ENCODE measurements at regions of chr18 and their contacts with region 1.

Region 1: DNA sequence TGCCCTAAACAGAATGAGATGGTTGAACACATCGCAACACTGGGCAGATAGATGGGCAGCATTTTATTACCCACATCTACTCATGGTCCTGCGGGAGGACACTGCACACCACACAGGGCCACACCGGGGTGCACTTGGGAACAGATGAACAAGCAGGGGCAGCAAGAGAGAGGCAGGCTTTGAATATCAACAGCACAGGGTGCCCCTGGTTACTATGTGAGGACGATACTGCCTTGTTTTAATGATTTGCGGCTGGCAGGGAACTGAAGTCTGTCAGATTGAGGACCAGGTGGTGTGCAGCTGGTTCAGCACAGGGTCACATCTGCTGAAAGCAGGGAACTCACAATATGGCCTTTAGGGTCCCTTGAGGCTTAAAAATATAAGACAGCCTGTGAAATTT is 195.7 kb downstream of the PIEZO2 start:
- DNase-seq: peak; percentile 84
- ATAC-seq: peak; percentile 65
- H3K4me3 ChIP-seq: peak overlapping the region; percentile 30; the same call in 1 of the 2 replicates
- H3K27ac ChIP-seq: peak overlapping the region; percentile 100
- H3K4me1 ChIP-seq: peaks cover 41% of the 10 kb centered on the region
- H3K27me3 ChIP-seq: no peaks in the 10 kb centered on the region
- CTCF ChIP-seq: no peak; a peak in 1 of 6 replicates
- EP300 ChIP-seq: peak; percentile 55 to 69; a peak in 3 of 4 replicates
- POLR2A ChIP-seq: peak; percentile 80
- RAD21 ChIP-seq: peak; percentile 21; the same call in 1 of the 2 replicates

Region 2: DNA sequence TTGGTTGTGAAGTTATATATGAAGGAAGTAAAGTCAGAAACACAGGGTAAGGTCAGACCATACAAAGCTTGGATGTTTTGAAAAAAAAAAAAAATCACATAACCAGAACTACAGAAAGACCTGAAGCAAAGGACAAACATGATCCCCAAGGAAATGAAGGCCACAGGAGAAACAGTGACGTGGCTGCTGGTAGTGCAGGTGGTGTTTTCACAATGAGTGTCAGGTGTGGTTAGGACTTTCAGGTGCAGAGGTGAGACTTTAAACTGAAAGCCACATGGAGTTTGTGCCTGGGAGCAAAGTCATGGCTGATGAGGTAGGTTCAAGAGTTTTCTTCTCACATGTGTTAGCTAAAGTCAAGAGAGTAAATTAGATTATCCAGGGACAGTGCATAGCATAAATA is 75.0 kb before region 1 on chr18:
- CTCF ChIA-PET with region 1: interaction called, 6 read pairs
- POLR2A ChIA-PET with region 1: interaction called, 8 read pairs
- RAD21 ChIA-PET with region 1: interaction called, 19 read pairs
- SMC1A ChIA-PET with region 1: interaction called, 27 read pairs
- in situ Hi-C with region 1: no loop called
- intact Hi-C with region 1: loop called (anchors 1 kb)
- DNase-seq: peak; percentile 93
- ATAC-seq: peak; percentile 82
- H3K4me3 ChIP-seq: no peak overlapping the region
- H3K27ac ChIP-seq: peak overlapping the region; percentile 88
- H3K4me1 ChIP-seq: peaks cover 49% of the 10 kb centered on the region
- H3K27me3 ChIP-seq: no peaks in the 10 kb centered on the region
- CTCF ChIP-seq: no peak
- EP300 ChIP-seq: peak; percentile 90 to 96
- POLR2A ChIP-seq: no peak
- RAD21 ChIP-seq: 0 out of 2 replicates have a peak, but pooled peaks have one; percentile 17

Region 3: GRCh38 chr18:10936176-10937053 is 17.3 kb before region 1 on chr18:
- CTCF ChIA-PET with region 1: no interaction called
- POLR2A ChIA-PET with region 1: interaction called, 6 read pairs
- RAD21 ChIA-PET with region 1: interaction called, 3 read pairs
- SMC1A ChIA-PET with region 1: interaction called, 20 read pairs
- in situ Hi-C with region 1: no loop called
- intact Hi-C with region 1: no loop called
- DNase-seq: no peak
- ATAC-seq: no peak
- H3K4me3 ChIP-seq: no peak overlapping the region
- H3K27ac ChIP-seq: no peak overlapping the region
- H3K4me1 ChIP-seq: peaks cover 8% of the 10 kb centered on the region
- H3K27me3 ChIP-seq: no peaks in the 10 kb centered on the region
- CTCF ChIP-seq: no peak
- EP300 ChIP-seq: no peak
- POLR2A ChIP-seq: no peak
- RAD21 ChIP-seq: no peak

Region 4: GRCh38 chr18:10973567-10974203 is 20.0 kb after region 1 on chr18:
- CTCF ChIA-PET with region 1: interaction called, 7 read pairs
- POLR2A ChIA-PET with region 1: interaction called, 10 read pairs
- RAD21 ChIA-PET with region 1: interaction called, 6 read pairs
- SMC1A ChIA-PET with region 1: interaction called, 45 read pairs
- in situ Hi-C with region 1: no loop called
- intact Hi-C with region 1: no loop called
- DNase-seq: no peak
- ATAC-seq: peak; percentile 85
- H3K4me3 ChIP-seq: no peak overlapping the region
- H3K27ac ChIP-seq: peak overlapping the region; percentile 62; the same call in 1 of the 2 replicates
- H3K4me1 ChIP-seq: peaks cover 25% of the 10 kb centered on the region
- H3K27me3 ChIP-seq: no peaks in the 10 kb centered on the region
- CTCF ChIP-seq: no peak
- EP300 ChIP-seq: no peak
- POLR2A ChIP-seq: no peak
- RAD21 ChIP-seq: no peak

Region 5: DNA sequence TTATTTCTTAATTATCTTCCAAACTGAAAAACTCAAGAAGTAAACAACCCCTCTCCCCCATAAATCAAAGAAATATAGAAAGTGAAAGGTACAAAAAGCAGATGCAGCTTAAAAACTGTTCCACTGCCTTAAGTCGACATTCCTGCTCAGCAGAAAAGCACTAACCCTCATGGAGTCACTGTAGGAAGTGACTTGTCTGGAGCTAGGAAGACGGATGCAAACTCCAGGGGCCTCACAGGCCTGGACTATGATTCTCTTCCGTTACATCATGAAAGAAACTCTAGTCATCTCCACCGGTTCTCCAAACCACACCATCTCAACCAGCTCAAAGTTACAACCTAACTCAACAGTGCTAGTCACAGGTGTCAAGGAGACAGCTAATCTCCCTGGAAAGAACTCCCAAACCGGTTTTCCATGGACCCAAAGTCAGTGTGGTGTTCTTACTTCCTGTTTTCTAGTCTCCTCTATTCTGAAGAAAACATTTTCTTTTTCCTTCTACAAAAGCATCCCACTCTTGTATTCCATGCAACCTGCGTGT is 67.3 kb after region 1 on chr18:
- CTCF ChIA-PET with region 1: interaction called, 5 read pairs
- POLR2A ChIA-PET with region 1: interaction called, 4 read pairs
- RAD21 ChIA-PET with region 1: interaction called, 7 read pairs
- SMC1A ChIA-PET with region 1: interaction called, 12 read pairs
- in situ Hi-C with region 1: no loop called
- intact Hi-C with region 1: loop called (anchors 5 kb)
- DNase-seq: no peak
- ATAC-seq: peak; percentile 59
- H3K4me3 ChIP-seq: peak overlapping the region; percentile 53; the same call in 1 of the 2 replicates
- H3K27ac ChIP-seq: peak overlapping the region; percentile 54
- H3K4me1 ChIP-seq: peaks cover 34% of the 10 kb centered on the region
- H3K27me3 ChIP-seq: no peaks in the 10 kb centered on the region
- CTCF ChIP-seq: no peak
- EP300 ChIP-seq: no peak
- POLR2A ChIP-seq: no peak
- RAD21 ChIP-seq: no peak

Region 6: GRCh38 chr18:11052800-11053199 is 99.1 kb after region 1 on chr18:
- CTCF ChIA-PET with region 1: interaction called, 3 read pairs
- POLR2A ChIA-PET with region 1: interaction called, 6 read pairs
- RAD21 ChIA-PET with region 1: interaction called, 12 read pairs
- SMC1A ChIA-PET with region 1: interaction called, 9 read pairs
- in situ Hi-C with region 1: no loop called
- intact Hi-C with region 1: no loop called
- DNase-seq: no peak
- ATAC-seq: peak; percentile 92
- H3K4me3 ChIP-seq: no peak overlapping the region
- H3K27ac ChIP-seq: peak overlapping the region; percentile 22; the same call in 1 of the 2 replicates
- H3K4me1 ChIP-seq: peaks cover 15% of the 10 kb centered on the region
- H3K27me3 ChIP-seq: no peaks in the 10 kb centered on the region
- CTCF ChIP-seq: no peak
- EP300 ChIP-seq: no peak; a peak in 1 of 4 replicates
- POLR2A ChIP-seq: no peak
- RAD21 ChIP-seq: no peak

Measured in GM12878 (cell line).